Adrenal gland (tissue), 19 donors: ENCODE measurements at regions of chr22 and their contacts with region 1.

Region 1: GRCh38 chr22:31211862-31212730 is at the start of gene LIMK2:
- DNase-seq: peak; percentile 90 to 97 (median 95)
- H3K4me3 ChIP-seq: peak within 1 kb of the TSS in 3 of 4 donors; percentile 57 to 81 (median 67)
- H3K27ac ChIP-seq: peak within 1 kb of the TSS; percentile 28 to 87 (median 66)
- H3K4me1 ChIP-seq: peaks cover 6 to 31% of the 10 kb centered on the region in 2 donors
- H3K27me3 ChIP-seq: no peaks in the 10 kb centered on the region
- CTCF ChIP-seq: peak; percentile 37 to 80 (median 67)
- POLR2A ChIP-seq: peak; percentile 14 to 42
- total RNA-seq, gene LIMK2: 16.9 to 36.1 (median 24.3) TPM

Region 2: GRCh38 chr22:31160328-31160978 is 51.6 kb before region 1 on chr22:
- intact Hi-C with region 1: loop called in 1 of 2 experiments (anchors 10 kb)
- DNase-seq: peak in 6 of 7 donors; percentile 30 to 58 (median 44)
- H3K4me3 ChIP-seq: peak overlapping the region; percentile 35 to 90 (median 78)
- H3K27ac ChIP-seq: peak overlapping the region; percentile 48 to 93 (median 87)
- H3K4me1 ChIP-seq: peaks cover 13 to 28% of the 10 kb centered on the region in 2 donors
- H3K27me3 ChIP-seq: no peaks in the 10 kb centered on the region
- CTCF ChIP-seq: no peak
- POLR2A ChIP-seq: peak in 1 of 2 donors; percentile 14

Region 3: DNA sequence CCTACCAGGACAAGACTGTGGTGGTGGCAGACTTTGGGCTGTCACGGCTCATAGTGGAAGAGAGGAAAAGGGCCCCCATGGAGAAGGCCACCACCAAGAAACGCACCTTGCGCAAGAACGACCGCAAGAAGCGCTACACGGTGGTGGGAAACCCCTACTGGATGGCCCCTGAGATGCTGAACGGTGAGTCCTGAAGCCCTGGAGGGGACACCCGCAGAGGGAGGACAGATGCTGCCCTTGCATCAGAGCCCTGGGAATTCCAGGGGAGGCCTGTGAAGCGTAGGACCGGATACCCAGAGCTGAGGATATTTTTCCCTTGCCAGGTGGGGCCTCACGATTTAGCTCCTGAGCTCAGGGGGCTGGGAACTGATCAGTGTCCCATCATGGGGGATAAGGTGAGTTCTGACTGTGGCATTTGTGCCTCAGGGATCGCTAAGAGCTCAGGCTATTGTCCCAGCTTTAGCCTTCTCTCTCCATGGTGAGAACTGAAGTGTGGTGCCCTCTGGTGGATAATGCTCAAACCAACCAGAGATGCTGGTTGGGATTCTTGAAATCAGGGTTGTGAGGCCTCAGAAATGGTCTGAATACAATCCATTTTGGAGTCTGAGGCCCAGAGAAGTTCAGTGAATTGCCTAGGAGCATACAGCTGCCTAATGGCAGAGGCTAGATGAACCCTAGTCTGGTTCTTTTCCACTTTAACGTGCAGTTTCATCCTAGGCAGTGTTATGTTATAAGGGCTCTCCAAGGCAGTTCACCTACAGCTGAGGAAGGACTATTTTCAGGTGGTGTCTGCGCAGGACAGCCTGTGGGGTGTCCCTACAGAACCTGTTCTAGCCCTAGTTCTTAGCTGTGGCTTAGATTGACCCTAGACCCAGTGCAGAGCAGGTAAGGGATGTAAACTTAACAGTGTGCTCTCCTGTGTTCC is 60.7 kb after region 1 on chr22:
- intact Hi-C with region 1: loop called (anchors 5 to 10 kb)
- DNase-seq: peak in 6 of 7 donors; percentile 58 to 85 (median 72)
- H3K4me3 ChIP-seq: no peak overlapping the region
- H3K27ac ChIP-seq: no peak overlapping the region
- H3K4me1 ChIP-seq: no peaks in the 10 kb centered on the region
- H3K27me3 ChIP-seq: no peaks in the 10 kb centered on the region
- CTCF ChIP-seq: peak; percentile 63 to 82 (median 73)
- POLR2A ChIP-seq: no peak